GM13977 (cell line): ENCODE measurements at regions of chrX and their contacts with region 1.

Region 1: GRCh38 chrX:153554519-153555167 is 37.2 kb downstream of the ATP2B3 start:
- DNase-seq: peak; percentile 79
- CTCF ChIP-seq: peak; percentile 71

Region 2: GRCh38 chrX:153649178-153649914 is 94.7 kb after region 1 on chrX:
- in situ Hi-C with region 1: no loop called
- DNase-seq: peak; percentile 87
- CTCF ChIP-seq: peak; percentile 67

Region 3: GRCh38 chrX:153667956-153668396 is 113.3 kb after region 1 on chrX:
- in situ Hi-C with region 1: loop called (anchors 10 kb)
- DNase-seq: peak; percentile 85
- CTCF ChIP-seq: peak; percentile 75

Region 4: GRCh38 chrX:153782313-153782712 is 227.7 kb after region 1 on chrX:
- in situ Hi-C with region 1: no loop called
- DNase-seq: no peak
- CTCF ChIP-seq: peak; percentile 9